BJ (cell line): ENCODE measurements at regions of chr14 and their contacts with region 1.

Region 1: GRCh38 chr14:100372357-100373048 is 49.4 kb downstream of the SLC25A47 start:
- DNase-seq: no peak
- H3K4me3 ChIP-seq: no peak overlapping the region; the same call in 1 of the 2 replicates
- H3K27me3 ChIP-seq: no peaks in the 10 kb centered on the region
- CTCF ChIP-seq: no peak

Region 2: DNA sequence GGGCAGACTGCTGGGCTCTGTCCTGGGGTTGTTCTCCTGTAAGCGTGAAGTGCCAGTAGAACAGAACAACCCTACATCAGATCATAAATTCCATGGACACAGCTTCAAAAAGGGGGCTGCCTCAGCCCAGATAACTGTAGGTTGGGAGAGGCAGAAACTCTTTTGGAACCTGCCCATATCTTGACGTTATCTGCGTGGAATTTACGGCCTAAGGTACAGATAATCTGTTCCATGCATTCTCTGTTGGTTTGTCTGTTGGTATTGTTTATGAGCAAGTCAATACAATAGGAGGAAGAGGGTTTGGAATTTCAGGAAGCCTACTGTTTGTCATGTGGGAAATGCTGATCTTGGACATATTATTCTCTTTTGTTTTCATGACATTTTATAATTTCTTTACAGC is 12.6 kb before region 1 on chr14:
- CTCF ChIA-PET with region 1: interaction called, 3 read pairs
- POLR2A ChIA-PET with region 1: interaction called, 30 read pairs
- DNase-seq: no peak
- H3K4me3 ChIP-seq: no peak overlapping the region
- H3K27me3 ChIP-seq: no peaks in the 10 kb centered on the region
- CTCF ChIP-seq: no peak